Naive thymus-derived CD4-positive, alpha-beta T cell (primary cell): ENCODE measurements at regions of chr22 and their contacts with region 1.

Region 1: DNA sequence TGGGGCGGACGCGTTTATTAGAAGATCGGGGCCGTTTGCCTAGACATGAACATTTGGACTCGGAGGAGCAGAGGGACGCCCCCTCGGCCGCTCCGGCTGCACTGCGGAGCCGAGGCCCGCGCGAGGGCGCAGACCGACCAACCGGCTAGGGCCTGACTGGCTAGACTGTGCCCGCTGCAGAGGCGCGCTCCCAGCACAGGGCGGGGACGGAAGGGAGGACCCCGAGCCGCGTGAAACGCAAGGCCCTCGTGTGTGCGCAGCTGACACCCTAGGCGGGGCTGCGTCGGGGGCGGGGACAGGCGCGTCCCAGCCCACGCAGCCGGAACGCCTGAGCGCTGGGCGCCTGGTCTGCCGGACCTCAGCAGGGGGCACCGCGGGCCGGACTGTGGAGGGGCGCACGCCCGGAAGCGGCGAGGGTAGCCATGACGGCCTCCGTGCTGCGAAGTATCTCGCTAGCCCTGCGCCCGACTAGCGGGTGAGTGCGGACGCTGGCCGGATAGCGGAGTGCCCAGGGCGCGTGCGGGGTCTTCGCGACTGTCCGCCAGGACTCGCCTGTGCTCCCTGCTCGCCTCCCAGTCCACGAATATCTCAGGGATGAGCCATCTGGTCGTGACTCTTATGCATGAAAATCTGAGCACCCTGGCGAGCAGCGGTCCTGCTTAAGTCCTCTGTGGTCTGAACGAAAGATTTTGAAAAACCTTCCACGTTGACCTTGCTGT is at the start of gene MRPL40:
- DNase-seq: peak; percentile 70 to 92 (median 84)
- ATAC-seq: peak; percentile 90
- H3K4me3 ChIP-seq: peak within 1 kb of the TSS; percentile 97
- H3K4me3 Mint-ChIP-seq: peak within 1 kb of the TSS; percentile 82 to 94 (median 91)
- H3K27ac ChIP-seq: peak within 1 kb of the TSS; percentile 80
- H3K27ac Mint-ChIP-seq: peak within 1 kb of the TSS; percentile 80 to 97 (median 91)
- H3K4me1 ChIP-seq: peaks cover 16 to 23% of the 10 kb centered on the region in 2 donors
- H3K4me1 Mint-ChIP-seq: peaks cover 27 to 50% (median 40%) of the 10 kb centered on the region in 7 donors
- H3K27me3 ChIP-seq: no peaks in the 10 kb centered on the region
- H3K27me3 Mint-ChIP-seq: no peaks in the 10 kb centered on the region
- total RNA-seq, gene MRPL40: 11.5 to 21.2 (median 17.0) TPM

Region 2: GRCh38 chr22:19178656-19179496 is 253.4 kb before region 1 on chr22 and contains the start of gene SLC25A1:
- CTCF ChIA-PET with region 1: no interaction called
- POLR2A ChIA-PET with region 1: no interaction called
- intact Hi-C with region 1: loop called (anchors 1 to 5 kb)
- DNase-seq: peak in 8 of 9 donors; percentile 42 to 96 (median 49)
- ATAC-seq: peak; percentile 82
- H3K4me3 ChIP-seq: peak within 1 kb of the TSS; percentile 58
- H3K4me3 Mint-ChIP-seq: peak within 1 kb of the TSS; percentile 83 to 92 (median 86)
- H3K27ac ChIP-seq: peak within 1 kb of the TSS; percentile 63
- H3K27ac Mint-ChIP-seq: peak within 1 kb of the TSS; percentile 31 to 92 (median 85)
- H3K4me1 ChIP-seq: peaks cover 7 to 9% of the 10 kb centered on the region in 2 donors
- H3K4me1 Mint-ChIP-seq: peaks cover 13 to 28% (median 23%) of the 10 kb centered on the region in 7 donors
- H3K27me3 ChIP-seq: no peaks in the 10 kb centered on the region
- H3K27me3 Mint-ChIP-seq: no peaks in the 10 kb centered on the region
- total RNA-seq, gene SLC25A1: 19.3 to 34.0 (median 30.7) TPM

Region 3: GRCh38 chr22:19291580-19292457 is 140.5 kb before region 1 on chr22 and contains the start of gene CLTCL1:
- CTCF ChIA-PET with region 1: no interaction called
- POLR2A ChIA-PET with region 1: no interaction called
- intact Hi-C with region 1: loop called in 1 of 2 experiments (anchors 1 kb)
- DNase-seq: peak; percentile 38 to 81 (median 67)
- ATAC-seq: peak; percentile 90
- H3K4me3 ChIP-seq: peak within 1 kb of the TSS; percentile 82
- H3K4me3 Mint-ChIP-seq: peak within 1 kb of the TSS; percentile 76 to 93 (median 92)
- H3K27ac ChIP-seq: peak within 1 kb of the TSS; percentile 76
- H3K27ac Mint-ChIP-seq: peak within 1 kb of the TSS; percentile 64 to 93 (median 85)
- H3K4me1 ChIP-seq: peaks cover 6 to 8% of the 10 kb centered on the region in 2 donors
- H3K4me1 Mint-ChIP-seq: peaks cover 13 to 33% (median 25%) of the 10 kb centered on the region in 7 donors
- H3K27me3 ChIP-seq: no peaks in the 10 kb centered on the region
- H3K27me3 Mint-ChIP-seq: peaks cover 5 to 55% (median 23%) of the 10 kb centered on the region in 5 donors
- total RNA-seq, gene CLTCL1: 0.22 to 3.1 (median 1.4) TPM

Region 4: GRCh38 chr22:19361501-19362103 is 70.7 kb before region 1 on chr22:
- CTCF ChIA-PET with region 1: no interaction called
- POLR2A ChIA-PET with region 1: no interaction called
- intact Hi-C with region 1: no loop called
- DNase-seq: no peak
- ATAC-seq: peak; percentile 38
- H3K4me3 ChIP-seq: no peak overlapping the region
- H3K4me3 Mint-ChIP-seq: no peak overlapping the region
- H3K27ac ChIP-seq: no peak overlapping the region
- H3K27ac Mint-ChIP-seq: peak overlapping the region in 1 of 9 donors; percentile 47
- H3K4me1 ChIP-seq: no peaks in the 10 kb centered on the region
- H3K4me1 Mint-ChIP-seq: no peaks in the 10 kb centered on the region
- H3K27me3 ChIP-seq: no peaks in the 10 kb centered on the region
- H3K27me3 Mint-ChIP-seq: no peaks in the 10 kb centered on the region

Region 5: GRCh38 chr22:19419464-19420178 is 12.7 kb before region 1 on chr22:
- CTCF ChIA-PET with region 1: no interaction called
- POLR2A ChIA-PET with region 1: interaction called, 11 read pairs
- intact Hi-C with region 1: loop called in 1 of 2 experiments (anchors 1 kb)
- DNase-seq: peak in 8 of 9 donors; percentile 28 to 65 (median 44)
- ATAC-seq: peak; percentile 91
- H3K4me3 ChIP-seq: no peak overlapping the region
- H3K4me3 Mint-ChIP-seq: peak overlapping the region in 9 of 10 donors; percentile 8 to 65 (median 46)
- H3K27ac ChIP-seq: peak overlapping the region; percentile 61
- H3K27ac Mint-ChIP-seq: peak overlapping the region; percentile 81 to 95 (median 91)
- H3K4me1 ChIP-seq: peaks cover 27 to 40% of the 10 kb centered on the region in 2 donors
- H3K4me1 Mint-ChIP-seq: peaks cover 39 to 80% (median 71%) of the 10 kb centered on the region in 7 donors
- H3K27me3 ChIP-seq: no peaks in the 10 kb centered on the region
- H3K27me3 Mint-ChIP-seq: no peaks in the 10 kb centered on the region

Region 6: GRCh38 chr22:19447388-19448075 is 15.2 kb after region 1 on chr22 and contains the start of gene C22orf39:
- CTCF ChIA-PET with region 1: interaction called, 10 read pairs
- POLR2A ChIA-PET with region 1: interaction called, 41 read pairs
- intact Hi-C with region 1: loop called (anchors 1 kb)
- DNase-seq: peak; percentile 69 to 93 (median 90)
- ATAC-seq: peak; percentile 94
- H3K4me3 ChIP-seq: peak within 1 kb of the TSS; percentile 65
- H3K4me3 Mint-ChIP-seq: peak within 1 kb of the TSS; percentile 84 to 99 (median 92)
- H3K27ac ChIP-seq: peak within 1 kb of the TSS; percentile 81
- H3K27ac Mint-ChIP-seq: peak within 1 kb of the TSS; percentile 84 to 97 (median 94)
- H3K4me1 ChIP-seq: peaks cover 18 to 26% of the 10 kb centered on the region in 2 donors
- H3K4me1 Mint-ChIP-seq: peaks cover 21 to 61% (median 48%) of the 10 kb centered on the region in 7 donors
- H3K27me3 ChIP-seq: no peaks in the 10 kb centered on the region
- H3K27me3 Mint-ChIP-seq: no peaks in the 10 kb centered on the region
- total RNA-seq, gene C22orf39: 34.2 to 44.9 (median 36.8) TPM